ENCODE measurements at regions of chr5 and their contacts with region 1.

Region 1: DNA sequence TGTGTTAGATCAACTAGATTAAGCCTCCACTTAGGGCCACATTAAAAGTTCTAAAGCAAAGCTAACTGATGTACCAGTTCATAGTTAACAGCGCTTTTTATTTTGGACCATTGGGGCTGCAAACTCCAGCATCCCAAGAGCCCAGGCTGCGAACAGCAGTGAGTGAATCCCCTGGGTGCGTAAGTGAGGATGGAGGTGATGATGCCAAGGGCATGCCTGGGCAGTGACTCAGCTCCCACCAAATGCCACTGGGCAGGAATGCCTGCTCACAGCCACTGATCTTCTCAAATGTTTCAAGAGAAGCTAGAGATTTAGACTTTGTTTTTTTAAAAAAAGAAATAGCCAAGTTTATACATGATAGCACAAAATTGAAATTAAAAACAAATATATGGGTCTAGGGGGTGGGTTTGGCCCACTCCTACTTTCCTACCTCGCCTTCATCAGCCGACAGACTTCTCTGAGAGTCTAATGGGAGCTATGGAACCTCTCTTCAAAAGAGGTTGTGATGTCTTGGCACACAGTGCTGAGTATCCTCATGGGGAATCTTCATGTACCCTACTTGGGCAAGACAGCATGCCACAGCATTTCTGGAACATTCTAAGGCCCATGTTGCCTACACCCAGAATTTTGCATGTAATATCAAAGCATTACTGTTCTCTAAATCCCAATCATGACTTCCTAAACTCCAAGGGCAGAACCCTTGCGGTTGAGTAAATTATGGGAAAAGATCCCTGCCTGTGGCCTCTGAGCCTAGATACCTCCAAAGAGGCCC is 398.1 kb downstream of the EBF1 start:
- DNase-seq: peak; percentile 47
- H3K4me3 ChIP-seq: no peak overlapping the region
- CTCF ChIP-seq: no peak

Region 2: DNA sequence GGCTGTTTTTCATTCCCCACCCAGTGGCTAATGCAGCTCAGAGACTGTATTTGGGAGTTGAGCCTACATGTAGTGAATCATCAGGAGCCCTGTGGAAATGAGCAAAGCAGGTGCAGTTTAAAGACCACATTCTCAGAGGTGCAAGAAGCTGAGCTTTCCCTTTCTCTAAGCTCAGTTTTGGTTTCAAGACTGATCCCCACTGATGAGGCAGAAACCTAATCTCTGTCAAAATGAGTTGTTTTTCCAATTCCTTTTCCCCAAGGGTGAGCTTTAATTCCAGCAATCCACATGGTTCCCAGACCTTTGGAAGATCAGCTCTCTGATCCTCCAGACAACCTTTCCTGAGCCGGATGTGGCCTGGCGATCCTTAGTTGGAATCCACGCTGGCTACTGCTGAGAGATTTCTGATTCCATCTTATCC is 22.4 kb before region 1 on chr5:
- CTCF ChIA-PET with region 1: no interaction called
- POLR2A ChIA-PET with region 1: no interaction called
- DNase-seq: no peak
- H3K4me3 ChIP-seq: no peak overlapping the region
- CTCF ChIP-seq: no peak

Region 3: GRCh38 chr5:158718738-158719505 is 17.3 kb after region 1 on chr5:
- CTCF ChIA-PET with region 1: no interaction called
- POLR2A ChIA-PET with region 1: interaction called, 22 read pairs
- DNase-seq: peak; percentile 82
- H3K4me3 ChIP-seq: no peak overlapping the region
- CTCF ChIP-seq: no peak

Region 4: GRCh38 chr5:158754018-158754514 is 52.5 kb after region 1 on chr5:
- CTCF ChIA-PET with region 1: interaction called, 5 read pairs
- POLR2A ChIA-PET with region 1: interaction called, 11 read pairs
- DNase-seq: peak; percentile 93
- H3K4me3 ChIP-seq: no peak overlapping the region
- CTCF ChIP-seq: no peak

Region 5: GRCh38 chr5:158923799-158924551 is 222.4 kb after region 1 on chr5:
- CTCF ChIA-PET with region 1: no interaction called
- POLR2A ChIA-PET with region 1: no interaction called
- DNase-seq: no peak
- H3K4me3 ChIP-seq: no peak overlapping the region
- CTCF ChIP-seq: no peak

Measured in AG04449 (cell line).